ENCODE measurements at regions of chr16 and their contacts with region 1.

Region 1: GRCh38 chr16:24041826-24042631 is 206.2 kb downstream of the PRKCB start:
- DNase-seq: peak; percentile 36 to 88
- H3K4me3 ChIP-seq: no peak overlapping the region
- H3K27ac ChIP-seq: no peak overlapping the region
- H3K4me1 ChIP-seq: peaks cover 0 to 12% (median 6%) of the 10 kb centered on the region in 4 experiments; a peak in 5 of 7 replicates
- H3K27me3 ChIP-seq: no peaks in the 10 kb centered on the region
- CTCF ChIP-seq: peak; percentile 73 to 83 (median 75)
- EP300 ChIP-seq: no peak
- POLR2A ChIP-seq: no peak
- RAD21 ChIP-seq: peak; percentile 89 to 90

Region 2: GRCh38 chr16:23950291-23950894 is 91.6 kb before region 1 on chr16:
- CTCF ChIA-PET with region 1: no interaction called
- POLR2A ChIA-PET with region 1: no interaction called
- DNase-seq: no peak
- H3K4me3 ChIP-seq: no peak overlapping the region
- H3K27ac ChIP-seq: no peak overlapping the region
- H3K4me1 ChIP-seq: peaks cover 2 to 11% (median 8%) of the 10 kb centered on the region in 4 experiments; a peak in 4 of 7 replicates
- H3K27me3 ChIP-seq: no peaks in the 10 kb centered on the region
- CTCF ChIP-seq: no peak
- EP300 ChIP-seq: no peak
- POLR2A ChIP-seq: no peak
- RAD21 ChIP-seq: no peak

Region 3: DNA sequence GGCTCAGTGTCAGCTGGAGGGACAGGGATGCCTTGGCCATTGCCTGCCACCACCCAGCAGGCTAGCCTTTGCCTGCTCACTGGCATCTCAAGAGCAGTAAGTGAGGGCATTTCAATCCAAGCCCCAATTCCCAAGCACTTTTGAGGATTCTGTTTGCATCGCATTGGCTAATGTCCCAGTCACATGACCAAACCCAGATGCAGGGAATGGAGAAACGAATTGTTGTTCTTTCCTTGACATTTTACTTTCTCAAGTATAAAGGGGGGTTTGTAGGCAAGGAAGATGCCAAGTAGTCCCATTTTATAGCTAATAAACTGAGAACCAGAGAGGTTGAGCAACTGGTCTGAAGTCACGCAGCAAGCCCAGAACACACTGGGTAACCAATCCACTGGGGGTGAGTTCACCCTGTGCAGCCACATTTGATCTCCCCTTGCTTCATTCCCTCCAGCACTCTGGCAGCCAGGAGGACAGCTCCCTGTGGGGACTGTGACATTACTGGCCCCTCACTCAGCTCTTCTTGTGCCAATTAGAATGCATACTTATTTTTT is 20.3 kb after region 1 on chr16:
- CTCF ChIA-PET with region 1: interaction called, 17 read pairs
- POLR2A ChIA-PET with region 1: no interaction called
- DNase-seq: no peak
- H3K4me3 ChIP-seq: no peak overlapping the region
- H3K27ac ChIP-seq: no peak overlapping the region
- H3K4me1 ChIP-seq: no peaks in the 10 kb centered on the region
- H3K27me3 ChIP-seq: no peaks in the 10 kb centered on the region
- CTCF ChIP-seq: no peak
- EP300 ChIP-seq: no peak
- POLR2A ChIP-seq: no peak
- RAD21 ChIP-seq: no peak

Region 4: GRCh38 chr16:24253192-24253591 is 211.2 kb after region 1 on chr16:
- CTCF ChIA-PET with region 1: interaction called, 104 read pairs
- POLR2A ChIA-PET with region 1: interaction called, 3 read pairs
- DNase-seq: peak; percentile 33 to 54
- H3K4me3 ChIP-seq: no peak overlapping the region
- H3K27ac ChIP-seq: no peak overlapping the region
- H3K4me1 ChIP-seq: peaks cover 0 to 4% (median under 1%) of the 10 kb centered on the region in 4 experiments; a peak in 3 of 7 replicates
- H3K27me3 ChIP-seq: peaks cover 5 to 25% (median 15%) of the 10 kb centered on the region in 4 experiments
- CTCF ChIP-seq: peak; percentile 0 to 79 (median 79)
- EP300 ChIP-seq: no peak
- POLR2A ChIP-seq: no peak
- RAD21 ChIP-seq: peak; percentile 79 to 90

Region 5: DNA sequence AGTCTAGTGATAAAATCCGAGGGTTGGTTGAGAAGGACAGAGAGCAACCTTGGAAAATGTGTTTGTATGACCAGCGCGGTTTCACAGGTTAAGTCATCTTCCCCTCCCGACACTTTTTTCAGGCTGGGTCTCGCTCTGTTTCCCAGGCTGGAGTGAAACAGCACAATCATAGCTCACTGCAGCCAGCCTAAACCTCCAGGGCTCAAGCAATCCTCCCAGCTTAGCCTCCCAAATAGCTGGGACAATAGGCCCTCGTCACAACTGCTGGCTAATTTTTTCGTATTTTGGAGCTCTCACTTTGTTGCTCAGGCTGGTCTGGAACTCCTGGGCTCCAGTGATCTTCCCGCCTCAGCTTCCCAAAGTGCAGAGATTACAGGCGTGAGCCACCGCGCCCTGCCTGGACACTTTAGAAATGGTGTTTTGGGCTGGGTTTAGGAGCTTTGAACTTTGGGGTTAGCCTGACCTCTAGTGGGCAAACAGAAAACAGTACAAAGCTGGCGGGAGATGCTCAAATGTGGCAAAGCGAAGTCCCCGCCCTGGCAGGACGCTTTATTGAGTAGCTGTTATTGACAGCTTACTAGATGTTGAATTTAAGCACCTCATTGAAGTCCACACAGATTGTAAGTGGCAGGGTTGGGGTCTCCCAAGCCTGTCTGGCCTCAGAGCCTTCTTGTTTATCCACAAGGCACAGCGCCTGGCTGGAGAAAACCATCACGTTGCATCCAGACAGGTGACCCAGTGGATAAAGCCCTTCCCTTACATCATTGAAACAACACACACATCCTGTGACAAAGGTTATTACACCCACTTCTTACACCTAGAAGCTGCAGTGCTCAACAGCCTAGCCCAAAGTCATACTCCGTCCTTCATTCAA is 462.7 kb after region 1 on chr16:
- CTCF ChIA-PET with region 1: interaction called, 139 read pairs
- POLR2A ChIA-PET with region 1: interaction called, 4 read pairs
- DNase-seq: peak; percentile 38 to 72
- H3K4me3 ChIP-seq: no peak overlapping the region
- H3K27ac ChIP-seq: no peak overlapping the region
- H3K4me1 ChIP-seq: no peaks in the 10 kb centered on the region
- H3K27me3 ChIP-seq: no peaks in the 10 kb centered on the region; a peak in 1 of 7 replicates
- CTCF ChIP-seq: peak; percentile 58 to 92 (median 84)
- EP300 ChIP-seq: no peak
- POLR2A ChIP-seq: no peak
- RAD21 ChIP-seq: peak; percentile 95 to 98

Measured in H1 (cell line).